Activated naive CD4-positive, alpha-beta T cell treated with anti-CD3 and anti-CD28 coated beads for 36 hours (primary cell): ENCODE measurements at regions of chr20 and their contacts with region 1.

Region 1: DNA sequence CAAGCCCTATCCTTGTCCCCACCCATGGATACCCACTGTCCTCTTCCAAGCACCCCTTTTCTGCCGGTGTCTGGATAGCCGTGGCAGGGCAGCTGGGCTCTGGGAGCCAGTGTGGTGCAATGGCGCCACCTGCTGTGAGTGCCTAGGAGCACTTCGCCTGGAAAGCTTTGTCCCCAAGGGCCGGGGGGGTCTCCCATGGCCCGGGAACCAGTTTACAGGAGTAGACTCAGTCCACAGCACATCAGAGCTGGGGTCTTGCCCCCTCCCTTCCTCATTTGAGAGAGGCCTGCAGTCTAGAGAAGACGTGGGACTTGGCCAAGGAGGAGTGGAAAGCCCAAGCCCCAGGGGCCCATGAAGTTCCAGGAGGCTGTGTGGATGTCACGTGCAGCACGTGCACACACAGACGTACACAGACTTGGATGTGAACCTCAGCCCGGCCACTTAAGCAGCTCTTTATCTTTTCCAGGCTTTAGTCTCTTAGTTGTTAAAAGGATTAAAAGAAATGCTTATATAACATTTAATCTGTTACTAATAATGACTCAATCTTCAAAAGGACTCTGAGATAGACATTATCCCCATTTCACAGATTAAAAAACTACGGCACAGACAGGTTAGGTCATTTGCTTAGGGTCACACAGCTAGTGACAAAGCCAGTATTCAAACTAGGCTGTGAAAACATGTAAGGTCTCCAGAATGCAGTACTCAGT is 40.9 kb upstream of the CDH22 start:
- DNase-seq: peak; percentile 67
- H3K4me3 Mint-ChIP-seq: no peak overlapping the region
- H3K27ac Mint-ChIP-seq: no peak overlapping the region
- H3K4me1 Mint-ChIP-seq: peaks cover 16% of the 10 kb centered on the region
- H3K27me3 Mint-ChIP-seq: no peaks in the 10 kb centered on the region

Region 2: DNA sequence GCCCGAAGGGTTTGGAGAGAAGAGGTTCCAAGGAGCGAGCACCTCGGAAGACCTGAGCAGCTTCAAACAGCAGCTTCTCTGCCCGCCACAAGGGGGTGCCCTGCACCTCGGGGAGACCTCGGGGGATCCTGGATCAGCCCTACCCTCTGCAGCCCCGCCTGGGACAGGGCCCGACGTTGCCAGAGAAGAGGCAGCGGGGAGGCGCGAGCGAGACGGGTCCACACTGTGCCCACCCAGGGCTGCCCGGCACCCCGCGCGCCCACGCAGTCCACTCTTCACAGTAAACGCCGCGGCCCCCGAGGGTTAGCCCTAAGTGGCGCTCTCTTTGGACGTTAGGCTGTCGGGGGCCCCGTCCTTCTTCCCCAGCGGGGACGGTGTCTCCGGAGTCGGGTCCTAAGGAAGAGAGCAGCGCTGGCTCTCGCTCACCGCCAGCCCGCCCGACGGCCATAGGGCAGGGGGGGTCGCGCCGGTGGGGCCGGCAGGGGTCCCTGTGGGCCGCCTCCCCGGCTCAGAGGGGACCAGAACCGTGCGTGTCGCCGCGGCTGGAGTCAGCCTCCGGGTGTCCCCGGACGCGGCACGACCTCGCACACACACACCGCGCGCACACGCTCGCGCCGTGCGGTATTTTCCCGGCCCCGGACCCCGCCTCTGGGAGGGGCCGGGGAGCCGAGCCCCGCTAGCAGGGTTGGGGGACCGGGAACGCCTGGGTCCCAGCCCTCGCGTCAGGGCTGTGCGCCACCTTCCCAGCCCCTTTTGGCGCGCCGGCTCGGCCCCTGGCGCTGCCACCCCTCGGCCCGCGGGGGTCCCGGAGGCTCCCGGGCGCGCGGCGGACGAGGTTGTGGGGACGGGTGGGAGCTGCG is 41.8 kb before region 1 on chr20:
- CTCF ChIA-PET with region 1: interaction called, 21 read pairs
- intact Hi-C with region 1: loop called (anchors 2 kb)
- DNase-seq: peak; percentile 81
- H3K4me3 Mint-ChIP-seq: peak overlapping the region; percentile 25
- H3K27ac Mint-ChIP-seq: no peak overlapping the region
- H3K4me1 Mint-ChIP-seq: peaks cover 7% of the 10 kb centered on the region
- H3K27me3 Mint-ChIP-seq: peaks cover 57% of the 10 kb centered on the region

Region 3: GRCh38 chr20:46324960-46325703 is 24.1 kb before region 1 on chr20:
- CTCF ChIA-PET with region 1: interaction called, 10 read pairs
- intact Hi-C with region 1: no loop called
- DNase-seq: peak; percentile 31
- H3K4me3 Mint-ChIP-seq: no peak overlapping the region
- H3K27ac Mint-ChIP-seq: no peak overlapping the region
- H3K4me1 Mint-ChIP-seq: no peaks in the 10 kb centered on the region
- H3K27me3 Mint-ChIP-seq: peaks cover 15% of the 10 kb centered on the region

Region 4: GRCh38 chr20:46400828-46401477 is 51.8 kb after region 1 on chr20:
- CTCF ChIA-PET with region 1: no interaction called
- intact Hi-C with region 1: no loop called
- DNase-seq: peak; percentile 63
- H3K4me3 Mint-ChIP-seq: peak overlapping the region; percentile 59
- H3K27ac Mint-ChIP-seq: peak overlapping the region; percentile 91
- H3K4me1 Mint-ChIP-seq: peaks cover 60% of the 10 kb centered on the region
- H3K27me3 Mint-ChIP-seq: no peaks in the 10 kb centered on the region